ENCODE measurements at regions of chr15 and their contacts with region 1.

Region 1: DNA sequence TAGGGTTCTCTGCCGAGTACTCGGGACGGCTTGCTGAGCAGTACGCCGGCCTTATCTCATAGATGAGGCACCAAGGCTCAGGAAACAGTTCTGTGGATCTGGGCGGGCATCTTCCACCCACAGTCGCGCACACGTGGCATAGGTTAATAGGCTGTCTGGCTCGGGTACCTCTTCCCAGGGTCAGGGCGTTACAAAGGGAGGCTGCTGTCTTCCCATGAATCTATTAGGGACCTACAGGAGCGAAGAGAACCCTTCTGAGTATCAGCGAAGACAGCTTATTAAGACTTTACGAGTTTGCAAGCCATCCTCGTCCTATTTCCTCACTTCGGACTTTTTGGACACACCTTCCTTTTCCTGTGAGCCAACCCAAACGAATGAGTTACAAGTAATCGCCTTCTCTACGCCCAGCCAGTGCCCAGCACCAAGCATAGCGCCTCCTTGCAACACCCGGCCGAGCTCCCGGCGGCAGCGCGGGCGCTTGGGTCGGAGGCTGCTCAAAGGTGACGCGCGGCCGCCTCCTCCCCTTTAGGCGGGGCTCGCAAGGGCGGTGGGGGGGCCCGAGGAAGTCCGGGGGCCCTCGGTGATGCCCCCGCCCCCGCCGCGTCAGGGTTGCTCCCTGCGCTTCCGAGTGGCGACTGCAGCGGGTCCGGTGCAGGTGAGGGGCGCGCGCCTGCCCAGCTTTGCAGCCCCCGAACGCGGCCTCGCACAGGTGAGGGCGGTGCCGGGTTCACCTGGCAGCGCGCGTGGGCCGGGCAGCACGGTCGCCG is at the start of gene MCTP2:
- DNase-seq: peak; percentile 89
- H3K4me3 Mint-ChIP-seq: peak within 1 kb of the TSS; percentile 87
- H3K27ac Mint-ChIP-seq: peak within 1 kb of the TSS; percentile 91
- H3K4me1 Mint-ChIP-seq: peaks cover 64% of the 10 kb centered on the region
- H3K27me3 Mint-ChIP-seq: peaks cover 2% of the 10 kb centered on the region
- total RNA-seq, gene MCTP2: 38.5 to 41.7 TPM

Region 2: DNA sequence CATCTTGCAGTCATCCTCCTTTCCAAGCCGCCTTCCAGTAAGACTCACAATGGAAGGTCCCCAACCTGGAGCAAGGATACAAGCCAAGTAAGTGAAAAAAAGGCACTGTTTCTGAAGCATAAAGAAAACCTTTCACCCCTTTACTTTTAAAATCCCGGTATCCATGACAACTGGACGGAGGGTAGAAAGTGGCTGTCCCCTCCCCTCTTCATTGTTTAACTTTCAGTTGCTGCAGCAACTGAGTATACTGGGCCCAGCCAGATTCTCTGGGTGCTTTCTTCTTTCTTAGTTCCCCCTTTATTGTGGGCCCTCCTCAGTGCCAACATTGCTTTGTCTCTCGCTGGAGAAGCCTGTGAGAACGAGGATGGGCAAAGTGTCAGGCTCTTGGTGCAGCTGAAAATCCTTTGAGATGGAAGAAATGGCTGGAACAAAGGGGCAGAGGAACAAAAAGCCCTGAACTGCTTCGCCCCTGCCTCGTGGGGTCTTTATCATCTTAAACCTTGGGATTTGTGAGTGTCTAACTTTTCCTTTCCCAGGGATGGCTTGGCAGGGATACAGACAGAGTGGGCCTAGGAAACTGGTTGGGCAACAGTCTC is 918.1 kb before region 1 on chr15:
- CTCF ChIA-PET with region 1: no interaction called
- POLR2A ChIA-PET with region 1: no interaction called
- intact Hi-C with region 1: no loop called
- DNase-seq: no peak
- H3K4me3 Mint-ChIP-seq: no peak overlapping the region
- H3K27ac Mint-ChIP-seq: no peak overlapping the region
- H3K4me1 Mint-ChIP-seq: no peaks in the 10 kb centered on the region
- H3K27me3 Mint-ChIP-seq: peaks cover 3% of the 10 kb centered on the region

Region 3: GRCh38 chr15:94163999-94164807 is 66.9 kb before region 1 on chr15:
- CTCF ChIA-PET with region 1: interaction called, 24 read pairs
- POLR2A ChIA-PET with region 1: interaction called, 3 read pairs
- intact Hi-C with region 1: no loop called
- DNase-seq: peak; percentile 68
- H3K4me3 Mint-ChIP-seq: no peak overlapping the region
- H3K27ac Mint-ChIP-seq: no peak overlapping the region
- H3K4me1 Mint-ChIP-seq: no peaks in the 10 kb centered on the region
- H3K27me3 Mint-ChIP-seq: no peaks in the 10 kb centered on the region

Region 4: GRCh38 chr15:94206463-94207167 is 24.5 kb before region 1 on chr15:
- CTCF ChIA-PET with region 1: no interaction called
- POLR2A ChIA-PET with region 1: no interaction called
- intact Hi-C with region 1: loop called (anchors 1 kb)
- DNase-seq: peak; percentile 71
- H3K4me3 Mint-ChIP-seq: no peak overlapping the region
- H3K27ac Mint-ChIP-seq: peak overlapping the region; percentile 78
- H3K4me1 Mint-ChIP-seq: peaks cover 18% of the 10 kb centered on the region
- H3K27me3 Mint-ChIP-seq: peaks cover 18% of the 10 kb centered on the region

Region 5: GRCh38 chr15:94272251-94272898 is 41.2 kb after region 1 on chr15:
- CTCF ChIA-PET with region 1: no interaction called
- POLR2A ChIA-PET with region 1: no interaction called
- intact Hi-C with region 1: loop called (anchors 1 kb)
- DNase-seq: no peak
- H3K4me3 Mint-ChIP-seq: no peak overlapping the region
- H3K27ac Mint-ChIP-seq: no peak overlapping the region
- H3K4me1 Mint-ChIP-seq: peaks cover 20% of the 10 kb centered on the region
- H3K27me3 Mint-ChIP-seq: no peaks in the 10 kb centered on the region

Region 6: GRCh38 chr15:94295275-94295674 is 64.1 kb after region 1 on chr15:
- CTCF ChIA-PET with region 1: no interaction called
- POLR2A ChIA-PET with region 1: no interaction called
- intact Hi-C with region 1: no loop called
- DNase-seq: no peak
- H3K4me3 Mint-ChIP-seq: no peak overlapping the region
- H3K27ac Mint-ChIP-seq: no peak overlapping the region
- H3K4me1 Mint-ChIP-seq: peaks cover 40% of the 10 kb centered on the region
- H3K27me3 Mint-ChIP-seq: no peaks in the 10 kb centered on the region

Region 7: DNA sequence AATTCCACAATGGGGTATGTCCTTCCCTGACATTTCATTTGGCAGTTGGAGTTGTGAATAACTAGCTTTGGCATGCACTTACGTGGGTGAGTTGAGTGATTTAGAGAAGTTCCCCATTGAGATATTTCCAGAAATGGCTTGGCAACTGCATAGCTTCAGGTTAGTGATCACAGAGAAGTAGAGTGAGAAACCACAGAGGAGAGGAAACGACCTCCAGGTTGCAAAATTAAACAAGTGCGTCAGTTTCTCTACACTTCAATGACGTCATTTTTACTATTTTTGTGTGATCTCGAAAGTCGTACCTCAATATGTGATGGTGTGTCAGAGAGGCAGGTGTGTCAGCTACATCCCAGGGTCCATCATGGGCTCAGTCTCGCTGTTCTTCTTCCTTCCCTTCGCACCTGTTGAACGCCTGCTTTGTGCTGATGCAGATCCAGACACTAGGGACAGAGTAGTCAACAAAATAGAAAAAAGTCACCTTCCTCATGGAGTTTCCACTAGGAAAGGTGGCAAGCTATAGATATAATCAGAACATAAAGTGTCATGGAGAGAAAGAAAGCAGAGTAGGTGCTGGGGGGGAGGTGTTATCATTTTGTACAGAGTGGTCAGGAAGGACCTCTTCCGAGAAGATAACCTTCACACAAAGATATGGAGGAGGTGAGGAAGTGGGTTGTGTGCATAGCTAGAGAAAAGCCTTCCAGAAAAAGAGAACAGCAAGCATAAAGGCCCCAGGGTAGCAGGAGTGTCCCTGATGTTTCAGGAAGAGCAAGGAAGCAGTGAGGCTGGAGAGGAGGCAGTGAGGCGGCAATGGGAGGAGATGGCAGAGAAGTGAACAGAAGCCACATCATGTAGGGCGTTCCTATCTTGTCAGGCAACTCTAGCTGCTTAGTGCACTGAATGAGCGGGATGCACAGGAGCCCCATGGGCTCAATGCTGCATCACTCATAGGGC is 75.8 kb after region 1 on chr15:
- CTCF ChIA-PET with region 1: interaction called, 17 read pairs
- POLR2A ChIA-PET with region 1: interaction called, 34 read pairs
- intact Hi-C with region 1: loop called (anchors 1 kb)
- DNase-seq: peak; percentile 39
- H3K4me3 Mint-ChIP-seq: no peak overlapping the region
- H3K27ac Mint-ChIP-seq: peak overlapping the region; percentile 83
- H3K4me1 Mint-ChIP-seq: peaks cover 49% of the 10 kb centered on the region
- H3K27me3 Mint-ChIP-seq: no peaks in the 10 kb centered on the region